Activated CD8-positive, alpha-beta memory T cell treated with anti-CD3 and anti-CD28 coated beads, Interleukin-2, amount 10 ng/mL, durations not matched to agents 7 days and 5 days (primary cell): ENCODE measurements at regions of chr9 and their contacts with region 1.

Region 1: GRCh38 chr9:131733541-131734061 is 6.3 kb downstream of the RAPGEF1 start:
- DNase-seq: peak; percentile 76
- ATAC-seq: peak; percentile 28
- H3K4me3 Mint-ChIP-seq: peak overlapping the region; percentile 88
- H3K27ac Mint-ChIP-seq: peak overlapping the region; percentile 96
- H3K4me1 Mint-ChIP-seq: peaks cover 82% of the 10 kb centered on the region
- H3K27me3 Mint-ChIP-seq: no peaks in the 10 kb centered on the region

Region 2: DNA sequence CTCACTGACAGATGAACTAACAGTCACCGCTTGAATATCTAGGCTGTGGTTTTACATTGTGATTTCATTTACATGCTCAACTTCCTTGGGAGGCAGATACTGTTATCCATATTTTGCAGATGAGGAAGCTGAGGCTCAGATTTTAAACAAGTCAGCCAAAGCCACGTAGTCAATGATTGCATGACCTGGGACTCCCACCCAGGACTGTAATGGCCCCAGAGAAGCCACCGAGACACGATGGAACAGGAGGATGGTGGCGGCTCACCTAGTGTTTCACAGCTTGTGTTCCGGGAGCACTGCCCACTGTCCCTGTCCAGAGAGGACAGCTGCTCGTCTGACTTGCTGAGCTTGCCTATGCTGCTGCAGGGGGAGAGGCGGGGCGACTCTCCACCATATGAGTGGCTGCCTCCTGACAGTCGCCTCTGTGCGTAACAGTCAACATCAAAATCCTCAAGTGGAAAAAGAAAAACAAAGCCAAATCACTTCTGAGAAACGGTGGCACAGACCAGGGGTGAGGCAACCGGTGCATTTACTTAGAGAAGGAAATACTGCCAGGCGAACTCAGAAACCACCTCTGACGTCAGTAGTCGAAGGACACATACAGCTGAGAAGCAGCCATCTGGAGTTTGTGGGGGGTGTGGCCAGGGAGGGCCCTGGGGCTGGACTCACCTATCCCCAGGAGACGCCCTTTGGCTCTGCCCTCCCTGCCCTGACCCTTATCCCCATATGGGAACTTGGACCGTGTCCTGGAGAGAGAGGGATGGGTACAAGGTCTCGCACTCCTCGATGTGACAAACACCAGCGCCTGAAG is 105.7 kb before region 1 on chr9:
- CTCF ChIA-PET with region 1: interaction called, 29 read pairs
- DNase-seq: peak; percentile 93
- ATAC-seq: peak; percentile 84
- H3K4me3 Mint-ChIP-seq: peak overlapping the region; percentile 53
- H3K27ac Mint-ChIP-seq: peak overlapping the region; percentile 91
- H3K4me1 Mint-ChIP-seq: peaks cover 82% of the 10 kb centered on the region
- H3K27me3 Mint-ChIP-seq: no peaks in the 10 kb centered on the region

Region 3: GRCh38 chr9:131645078-131645776 is 88.4 kb before region 1 on chr9:
- CTCF ChIA-PET with region 1: interaction called, 16 read pairs
- DNase-seq: peak; percentile 58
- ATAC-seq: peak; percentile 53
- H3K4me3 Mint-ChIP-seq: no peak overlapping the region
- H3K27ac Mint-ChIP-seq: peak overlapping the region; percentile 80
- H3K4me1 Mint-ChIP-seq: peaks cover 58% of the 10 kb centered on the region
- H3K27me3 Mint-ChIP-seq: no peaks in the 10 kb centered on the region

Region 4: GRCh38 chr9:131678499-131679111 is 55.0 kb before region 1 on chr9:
- CTCF ChIA-PET with region 1: interaction called, 126 read pairs
- DNase-seq: peak; percentile 95
- ATAC-seq: peak; percentile 95
- H3K4me3 Mint-ChIP-seq: peak overlapping the region; percentile 80
- H3K27ac Mint-ChIP-seq: peak overlapping the region; percentile 99
- H3K4me1 Mint-ChIP-seq: peaks cover 77% of the 10 kb centered on the region
- H3K27me3 Mint-ChIP-seq: no peaks in the 10 kb centered on the region

Region 5: GRCh38 chr9:131719262-131719908 is 14.2 kb before region 1 on chr9:
- CTCF ChIA-PET with region 1: interaction called, 10 read pairs
- DNase-seq: no peak
- ATAC-seq: peak; percentile 22
- H3K4me3 Mint-ChIP-seq: no peak overlapping the region
- H3K27ac Mint-ChIP-seq: peak overlapping the region; percentile 67
- H3K4me1 Mint-ChIP-seq: peaks cover 62% of the 10 kb centered on the region
- H3K27me3 Mint-ChIP-seq: no peaks in the 10 kb centered on the region